ENCODE measurements at regions of chr5 and their contacts with region 1.

Region 1: GRCh38 chr5:30874241-30875034 is 319.0 kb upstream of the CDH6 start:
- DNase-seq: peak in 3 of 5 donors; percentile 9 to 32 (median 28)
- ATAC-seq: peak; percentile 83 to 95 (median 90)
- H3K4me3 ChIP-seq: no peak overlapping the region
- H3K27ac ChIP-seq: peak overlapping the region in 8 of 12 donors; percentile 2 to 71 (median 26)
- H3K4me1 ChIP-seq: peaks cover 0 to 15% (median 0%) of the 10 kb centered on the region in 12 donors
- H3K27me3 ChIP-seq: no peaks in the 10 kb centered on the region
- CTCF ChIP-seq: no peak
- POLR2A ChIP-seq: no peak

Region 2: DNA sequence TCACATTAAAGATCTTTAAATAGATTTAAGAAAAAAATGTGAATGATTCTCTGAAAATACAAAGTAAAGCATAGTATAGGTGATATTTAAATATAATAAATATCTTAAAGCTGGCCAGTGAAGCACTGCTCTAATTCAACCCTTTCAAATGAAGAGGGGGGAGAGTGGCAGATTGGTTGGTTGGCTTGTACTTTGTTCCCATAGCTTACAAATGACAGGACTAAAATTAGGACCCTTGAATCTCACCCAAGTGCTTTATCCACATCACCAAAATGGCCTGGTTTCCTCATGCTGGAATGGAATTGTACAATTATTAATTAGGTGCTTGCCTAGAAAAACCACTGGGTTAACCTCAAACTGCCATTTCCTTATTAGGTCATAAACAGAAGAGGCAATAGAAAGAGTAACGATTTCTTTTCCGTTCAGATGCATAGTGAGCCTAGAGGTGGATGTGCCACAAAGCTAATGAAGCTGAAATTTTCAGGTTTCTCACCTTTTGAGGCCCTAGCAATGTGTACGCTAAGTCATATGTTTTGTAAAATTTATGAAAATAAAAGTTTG is 35.4 kb before region 1 on chr5:
- intact Hi-C with region 1: loop called in 1 of 10 experiments (anchors 5 kb)
- DNase-seq: peak in 1 of 5 donors; percentile 8
- ATAC-seq: peak; percentile 69 to 87 (median 79)
- H3K4me3 ChIP-seq: no peak overlapping the region
- H3K27ac ChIP-seq: peak overlapping the region in 11 of 12 donors; percentile 27 to 83 (median 66)
- H3K4me1 ChIP-seq: peaks cover 0 to 27% (median 8%) of the 10 kb centered on the region in 12 donors
- H3K27me3 ChIP-seq: no peaks in the 10 kb centered on the region
- CTCF ChIP-seq: no peak
- POLR2A ChIP-seq: no peak

Region 3: GRCh38 chr5:31096238-31096865 is 221.9 kb after region 1 on chr5:
- intact Hi-C with region 1: no loop called
- DNase-seq: no peak
- ATAC-seq: peak in 2 of 4 donors; percentile 73 to 86
- H3K4me3 ChIP-seq: no peak overlapping the region
- H3K27ac ChIP-seq: no peak overlapping the region
- H3K4me1 ChIP-seq: peaks cover 0 to 9% (median 0%) of the 10 kb centered on the region in 12 donors
- H3K27me3 ChIP-seq: no peaks in the 10 kb centered on the region
- CTCF ChIP-seq: no peak
- POLR2A ChIP-seq: no peak

Measured in heart left ventricle (tissue), 16 donors.